ENCODE measurements at regions of chr1 and their contacts with region 1.

Region 1: GRCh38 chr1:1479547-1480487 is 8.3 kb downstream of the ATAD3B start:
- DNase-seq: no peak
- H3K4me3 ChIP-seq: no peak overlapping the region
- H3K27ac ChIP-seq: no peak overlapping the region
- H3K4me1 ChIP-seq: no peaks in the 10 kb centered on the region
- H3K27me3 ChIP-seq: no peaks in the 10 kb centered on the region
- CTCF ChIP-seq: no peak
- POLR2A ChIP-seq: no peak

Region 2: DNA sequence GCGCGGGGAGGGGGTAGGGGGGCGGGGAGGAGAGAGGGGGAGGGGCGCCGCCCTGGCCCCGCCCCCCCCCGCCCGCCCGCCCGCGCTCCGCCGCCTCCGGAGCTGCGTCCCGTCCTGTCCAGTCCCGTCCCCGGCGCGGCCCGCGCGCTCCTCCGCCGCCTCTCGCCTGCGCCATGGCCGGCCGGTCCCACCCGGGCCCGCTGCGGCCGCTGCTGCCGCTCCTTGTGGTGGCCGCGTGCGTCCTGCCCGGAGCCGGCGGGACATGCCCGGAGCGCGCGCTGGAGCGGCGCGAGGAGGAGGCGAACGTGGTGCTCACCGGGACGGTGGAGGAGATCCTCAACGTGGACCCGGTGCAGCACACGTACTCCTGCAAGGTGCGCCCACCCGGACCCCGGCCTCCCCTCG is 459.8 kb before region 1 on chr1 and contains the start of gene AGRN:
- intact Hi-C with region 1: loop called (anchors 10 kb)
- DNase-seq: no peak
- H3K4me3 ChIP-seq: peak within 1 kb of the TSS; percentile 61 to 84 (median 80)
- H3K27ac ChIP-seq: peak within 1 kb of the TSS; percentile 92 to 98
- H3K4me1 ChIP-seq: peaks cover 4 to 18% of the 10 kb centered on the region in 2 donors
- H3K27me3 ChIP-seq: no peaks in the 10 kb centered on the region
- CTCF ChIP-seq: no peak
- POLR2A ChIP-seq: no peak
- total RNA-seq, gene AGRN: 9.1 to 37.0 (median 30.5) TPM

Region 3: DNA sequence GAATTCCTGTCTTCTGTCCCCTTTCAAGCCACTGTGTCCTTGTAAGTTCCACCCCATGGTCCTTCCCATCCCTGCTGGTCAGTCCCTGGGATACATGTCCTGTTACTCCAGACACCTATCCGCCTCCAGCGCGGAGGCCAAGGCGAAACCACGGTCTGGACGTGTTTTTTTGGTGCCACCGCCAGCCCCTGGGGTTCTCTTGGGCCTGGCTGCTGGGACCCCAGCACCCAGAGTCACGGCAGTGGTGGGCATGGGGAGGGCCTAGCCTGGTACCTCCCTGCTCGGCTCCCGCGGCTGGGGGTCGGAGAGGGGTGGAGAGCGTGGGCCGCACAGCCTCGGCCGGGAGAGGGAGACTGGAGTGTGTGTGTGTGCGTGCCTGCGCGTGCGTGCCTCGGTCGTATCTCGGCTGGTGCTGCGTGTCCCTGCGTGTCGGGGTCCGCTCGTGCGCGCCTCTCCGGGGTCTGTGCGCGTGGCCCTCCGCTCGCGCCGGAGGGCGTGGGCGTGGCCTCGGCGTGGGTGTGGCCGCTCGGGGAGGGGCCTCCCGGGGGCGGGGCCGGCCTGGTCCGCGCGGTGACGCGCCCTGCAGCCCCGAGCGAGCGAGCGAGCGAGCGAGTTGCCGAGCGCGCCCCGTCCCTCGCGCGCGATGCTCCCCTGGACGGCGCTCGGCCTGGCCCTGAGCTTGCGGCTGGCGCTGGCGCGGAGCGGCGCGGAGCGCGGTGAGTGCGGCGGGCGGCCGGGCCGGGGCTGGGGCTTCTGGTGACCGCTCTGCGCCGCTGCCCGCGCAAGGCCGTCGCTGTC is 44.5 kb before region 1 on chr1 and contains the start of gene VWA1:
- intact Hi-C with region 1: no loop called
- DNase-seq: peak in 1 of 2 donors; percentile 62
- H3K4me3 ChIP-seq: peak within 1 kb of the TSS; percentile 48 to 86 (median 63)
- H3K27ac ChIP-seq: peak within 1 kb of the TSS; percentile 95 to 99
- H3K4me1 ChIP-seq: peaks cover 39 to 58% of the 10 kb centered on the region in 2 donors
- H3K27me3 ChIP-seq: no peaks in the 10 kb centered on the region
- CTCF ChIP-seq: no peak
- POLR2A ChIP-seq: no peak
- total RNA-seq, gene VWA1: 13.0 to 44.8 (median 35.7) TPM

Region 4: GRCh38 chr1:2855206-2856065 is 1375.6 kb after region 1 on chr1:
- intact Hi-C with region 1: no loop called
- DNase-seq: no peak
- H3K4me3 ChIP-seq: peak overlapping the region in 2 of 3 donors; percentile 9 to 15
- H3K27ac ChIP-seq: no peak overlapping the region
- H3K4me1 ChIP-seq: no peaks in the 10 kb centered on the region
- H3K27me3 ChIP-seq: peaks cover 0 to 80% of the 10 kb centered on the region in 2 donors
- CTCF ChIP-seq: no peak
- POLR2A ChIP-seq: no peak